CD4-positive, alpha-beta memory T cell (primary cell): ENCODE measurements at regions of chr3 and their contacts with region 1.

Region 1: GRCh38 chr3:38210141-38210757 is 44.9 kb downstream of the OXSR1 start:
- DNase-seq: peak in 1 of 5 donors; percentile 19
- H3K4me3 ChIP-seq: no peak overlapping the region
- H3K4me3 Mint-ChIP-seq: peak overlapping the region in 4 of 8 donors; percentile 3 to 41 (median 15)
- H3K27ac ChIP-seq: no peak overlapping the region
- H3K27ac Mint-ChIP-seq: peak overlapping the region in 6 of 7 donors; percentile 23 to 79 (median 34)
- H3K4me1 ChIP-seq: peaks cover 34% of the 10 kb centered on the region
- H3K4me1 Mint-ChIP-seq: peaks cover 38 to 70% (median 55%) of the 10 kb centered on the region in 4 donors
- H3K27me3 ChIP-seq: no peaks in the 10 kb centered on the region
- H3K27me3 Mint-ChIP-seq: no peaks in the 10 kb centered on the region

Region 2: GRCh38 chr3:38173834-38174418 is 36.3 kb before region 1 on chr3:
- CTCF ChIA-PET with region 1: no interaction called
- POLR2A ChIA-PET with region 1: interaction called, 3 read pairs
- intact Hi-C with region 1: loop called (anchors 5 kb)
- DNase-seq: peak in 1 of 5 donors; percentile 11
- H3K4me3 ChIP-seq: no peak overlapping the region
- H3K4me3 Mint-ChIP-seq: peak overlapping the region; percentile 58 to 80 (median 72)
- H3K27ac ChIP-seq: peak overlapping the region; percentile 4
- H3K27ac Mint-ChIP-seq: peak overlapping the region; percentile 41 to 86 (median 70)
- H3K4me1 ChIP-seq: peaks cover 52% of the 10 kb centered on the region
- H3K4me1 Mint-ChIP-seq: peaks cover 45 to 72% (median 56%) of the 10 kb centered on the region in 4 donors
- H3K27me3 ChIP-seq: no peaks in the 10 kb centered on the region
- H3K27me3 Mint-ChIP-seq: no peaks in the 10 kb centered on the region

Region 3: DNA sequence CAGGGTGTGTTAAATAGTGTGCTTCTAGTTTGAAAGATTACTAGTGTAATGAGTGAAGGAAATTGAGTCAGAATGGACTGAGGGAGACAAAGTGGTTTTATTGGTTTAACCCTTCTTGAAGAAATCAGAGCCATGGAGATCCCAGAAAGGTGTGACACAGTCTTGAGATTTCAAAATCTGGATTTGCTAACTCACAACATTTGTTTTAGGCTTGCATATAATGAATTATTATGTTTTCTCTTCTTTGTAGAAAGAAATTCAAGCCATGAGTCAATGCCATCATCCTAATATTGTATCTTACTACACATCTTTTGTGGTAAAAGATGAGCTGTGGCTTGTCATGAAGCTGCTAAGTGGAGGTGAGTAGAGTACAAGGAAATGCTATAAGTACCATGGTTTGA is 19.8 kb before region 1 on chr3:
- CTCF ChIA-PET with region 1: no interaction called
- POLR2A ChIA-PET with region 1: no interaction called
- intact Hi-C with region 1: no loop called
- DNase-seq: no peak
- H3K4me3 ChIP-seq: no peak overlapping the region
- H3K4me3 Mint-ChIP-seq: no peak overlapping the region
- H3K27ac ChIP-seq: no peak overlapping the region
- H3K27ac Mint-ChIP-seq: no peak overlapping the region
- H3K4me1 ChIP-seq: no peaks in the 10 kb centered on the region
- H3K4me1 Mint-ChIP-seq: peaks cover 0 to 11% (median 3%) of the 10 kb centered on the region in 4 donors
- H3K27me3 ChIP-seq: no peaks in the 10 kb centered on the region
- H3K27me3 Mint-ChIP-seq: no peaks in the 10 kb centered on the region

Region 4: DNA sequence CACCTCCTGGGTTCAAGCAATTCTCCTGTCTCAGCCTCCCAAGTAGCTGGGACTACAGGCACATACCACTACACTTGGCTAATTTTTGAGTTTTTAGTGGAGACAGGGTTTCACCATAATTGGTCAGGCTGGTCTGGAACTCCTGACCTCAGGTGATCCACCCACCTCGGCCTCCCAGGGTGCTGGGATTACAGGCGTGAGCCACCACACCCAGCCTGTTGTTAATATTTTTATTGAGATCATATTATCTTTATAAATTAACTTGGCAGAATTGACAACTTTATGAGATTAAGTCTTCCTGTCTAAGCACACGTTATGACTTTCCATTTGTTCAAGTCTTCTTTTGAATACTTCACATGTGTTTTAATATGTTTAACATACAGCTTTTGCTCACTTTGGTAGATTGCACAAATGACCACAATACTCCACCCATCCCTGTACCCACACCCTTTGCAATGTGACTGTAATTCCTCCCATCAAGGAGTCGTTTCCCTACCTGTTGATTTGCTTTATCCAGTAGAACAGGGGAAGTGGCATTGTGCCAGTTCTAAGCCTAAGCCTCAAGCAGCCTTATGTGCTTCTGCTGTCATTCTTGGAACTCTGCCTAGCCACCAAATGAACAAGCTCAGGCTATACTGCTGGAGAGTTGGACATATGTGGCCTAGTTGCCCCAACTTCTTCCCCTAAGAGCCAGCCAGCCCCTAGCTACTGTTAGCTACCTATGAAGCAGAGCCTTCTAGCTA is 144.5 kb after region 1 on chr3:
- CTCF ChIA-PET with region 1: no interaction called
- POLR2A ChIA-PET with region 1: no interaction called
- intact Hi-C with region 1: no loop called
- DNase-seq: no peak
- H3K4me3 ChIP-seq: no peak overlapping the region
- H3K4me3 Mint-ChIP-seq: no peak overlapping the region
- H3K27ac ChIP-seq: no peak overlapping the region
- H3K27ac Mint-ChIP-seq: peak overlapping the region in 1 of 7 donors; percentile 9
- H3K4me1 ChIP-seq: no peaks in the 10 kb centered on the region
- H3K4me1 Mint-ChIP-seq: no peaks in the 10 kb centered on the region
- H3K27me3 ChIP-seq: no peaks in the 10 kb centered on the region
- H3K27me3 Mint-ChIP-seq: no peaks in the 10 kb centered on the region